ENCODE measurements at regions of chr6 and their contacts with region 1.

Region 1: GRCh38 chr6:133916650-133917151 is 27.8 kb downstream of the TCF21 start:
- DNase-seq: peak; percentile 85 to 97 (median 90)
- H3K4me3 ChIP-seq: peak overlapping the region in 1 of 59 donors; percentile 1
- H3K27ac ChIP-seq: no peak overlapping the region
- H3K27me3 ChIP-seq: no peaks in the 10 kb centered on the region
- CTCF ChIP-seq: peak; percentile 76 to 97 (median 93)

Region 2: DNA sequence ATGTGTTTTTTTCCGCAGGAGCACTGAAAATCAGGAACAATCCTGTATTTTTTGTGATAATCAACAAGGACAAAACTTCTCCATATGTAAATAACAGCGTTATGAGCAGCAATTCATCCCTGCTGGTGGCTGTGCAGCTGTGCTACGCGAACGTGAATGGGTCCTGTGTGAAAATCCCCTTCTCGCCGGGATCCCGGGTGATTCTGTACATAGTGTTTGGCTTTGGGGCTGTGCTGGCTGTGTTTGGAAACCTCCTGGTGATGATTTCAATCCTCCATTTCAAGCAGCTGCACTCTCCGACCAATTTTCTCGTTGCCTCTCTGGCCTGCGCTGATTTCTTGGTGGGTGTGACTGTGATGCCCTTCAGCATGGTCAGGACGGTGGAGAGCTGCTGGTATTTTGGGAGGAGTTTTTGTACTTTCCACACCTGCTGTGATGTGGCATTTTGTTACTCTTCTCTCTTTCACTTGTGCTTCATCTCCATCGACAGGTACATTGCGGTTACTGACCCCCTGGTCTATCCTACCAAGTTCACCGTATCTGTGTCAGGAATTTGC is 1346.4 kb before region 1 on chr6 and contains the start of gene TAAR6:
- intact Hi-C with region 1: no loop called
- DNase-seq: peak in 9 of 10 donors; percentile 32 to 81 (median 58)
- H3K4me3 ChIP-seq: peak within 1 kb of the TSS in 26 of 59 donors; percentile 2 to 46 (median 22)
- H3K27ac ChIP-seq: peak within 1 kb of the TSS; percentile 12 to 93 (median 85)
- H3K27me3 ChIP-seq: peaks cover 0 to 6% (median 0%) of the 10 kb centered on the region in 45 donors
- CTCF ChIP-seq: peak in 17 of 56 donors; percentile 9 to 44 (median 19)
- total RNA-seq, gene TAAR6: 0.35 to 1.2 (median 0.51) TPM in 6 of 120 experiments, not detected in the others

Region 3: GRCh38 chr6:133568970-133569889 is 347.5 kb before region 1 on chr6:
- intact Hi-C with region 1: loop called (anchors 1 to 5 kb)
- DNase-seq: peak in 3 of 10 donors; percentile 31 to 54 (median 38)
- H3K4me3 ChIP-seq: peak overlapping the region; percentile 25 to 72 (median 51)
- H3K27ac ChIP-seq: no peak overlapping the region
- H3K27me3 ChIP-seq: peaks cover 0 to 10% (median 0%) of the 10 kb centered on the region in 45 donors
- CTCF ChIP-seq: peak; percentile 70 to 96 (median 88)

Region 4: GRCh38 chr6:133764008-133764753 is 152.5 kb before region 1 on chr6:
- intact Hi-C with region 1: no loop called
- DNase-seq: no peak
- H3K4me3 ChIP-seq: no peak overlapping the region
- H3K27ac ChIP-seq: no peak overlapping the region
- H3K27me3 ChIP-seq: peaks cover 0 to 31% (median 0%) of the 10 kb centered on the region in 45 donors
- CTCF ChIP-seq: no peak

Region 5: DNA sequence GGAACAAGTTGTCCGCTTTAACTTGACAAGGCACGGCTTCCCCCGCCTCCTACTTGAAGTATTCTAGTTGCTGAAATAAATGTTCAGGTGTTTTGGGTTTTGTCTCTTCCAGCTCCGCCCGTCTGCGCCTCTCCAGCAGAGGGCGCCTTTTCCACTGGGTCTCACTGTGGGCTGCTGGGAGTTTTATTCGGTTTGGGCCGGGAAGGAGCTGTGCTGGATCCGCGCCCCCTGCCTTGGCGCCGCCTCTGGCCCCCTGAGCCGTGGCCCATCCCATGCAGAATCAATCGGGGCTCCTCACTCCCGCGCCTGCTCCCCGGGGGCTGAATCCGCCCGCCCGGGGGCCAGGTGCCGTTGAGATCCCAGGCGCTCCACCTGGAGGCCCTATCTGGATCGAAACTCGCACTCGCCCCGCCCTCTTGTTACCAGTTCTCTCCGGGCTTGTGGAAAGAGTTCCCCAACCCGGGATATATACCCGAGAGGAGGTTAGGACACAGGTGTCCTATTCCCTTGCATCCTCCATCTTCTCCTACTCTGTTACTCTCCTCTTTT is 78.8 kb before region 1 on chr6:
- intact Hi-C with region 1: loop called (anchors 5 kb)
- DNase-seq: no peak
- H3K4me3 ChIP-seq: peak overlapping the region in 49 of 59 donors; percentile 3 to 62 (median 39)
- H3K27ac ChIP-seq: no peak overlapping the region
- H3K27me3 ChIP-seq: peaks cover 0 to 38% (median 13%) of the 10 kb centered on the region in 45 donors
- CTCF ChIP-seq: peak in 55 of 56 donors; percentile 21 to 75 (median 55)

Region 6: GRCh38 chr6:133952815-133953633 is 36.3 kb after region 1 on chr6 and contains the start of gene TBPL1:
- intact Hi-C with region 1: loop called in 1 of 2 experiments (anchors 5 kb)
- DNase-seq: peak; percentile 90 to 97 (median 95)
- H3K4me3 ChIP-seq: peak within 1 kb of the TSS; percentile 47 to 98 (median 88)
- H3K27ac ChIP-seq: peak within 1 kb of the TSS; percentile 84 to 99 (median 96)
- H3K27me3 ChIP-seq: no peaks in the 10 kb centered on the region
- CTCF ChIP-seq: peak in 31 of 56 donors; percentile 7 to 59 (median 35)
- total RNA-seq, gene TBPL1: 23.9 to 70.4 (median 49.9) TPM

Measured in dorsolateral prefrontal cortex (tissue), 120 donors.